ENCODE measurements at regions of chrX and their contacts with region 1.

Region 1: DNA sequence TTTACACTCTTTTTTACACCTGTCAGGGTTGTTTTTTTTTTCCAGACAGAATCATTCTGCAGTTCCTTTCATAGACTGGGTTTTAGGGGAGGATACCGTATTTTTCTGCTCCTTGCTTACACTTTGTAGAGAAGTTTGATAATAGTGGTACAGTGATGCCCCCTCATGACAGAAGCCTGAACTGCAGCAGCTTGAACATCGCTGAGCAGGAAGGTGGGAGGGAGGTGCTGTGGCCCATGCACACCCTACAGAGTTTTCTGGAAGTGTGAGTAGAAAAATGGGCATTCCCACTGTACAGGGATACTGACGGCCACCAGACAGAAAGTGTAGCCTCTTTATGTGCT is 54.5 kb downstream of the RAB40A start:
- DNase-seq: peak; percentile 84
- H3K4me3 ChIP-seq: peak overlapping the region in 1 of 3 experiments; percentile 51
- H3K27ac ChIP-seq: no peak overlapping the region
- H3K4me1 ChIP-seq: no peaks in the 10 kb centered on the region
- H3K27me3 ChIP-seq: no peaks in the 10 kb centered on the region
- CTCF ChIP-seq: peak; percentile 69 to 71
- POLR2A ChIP-seq: no peak

Region 2: DNA sequence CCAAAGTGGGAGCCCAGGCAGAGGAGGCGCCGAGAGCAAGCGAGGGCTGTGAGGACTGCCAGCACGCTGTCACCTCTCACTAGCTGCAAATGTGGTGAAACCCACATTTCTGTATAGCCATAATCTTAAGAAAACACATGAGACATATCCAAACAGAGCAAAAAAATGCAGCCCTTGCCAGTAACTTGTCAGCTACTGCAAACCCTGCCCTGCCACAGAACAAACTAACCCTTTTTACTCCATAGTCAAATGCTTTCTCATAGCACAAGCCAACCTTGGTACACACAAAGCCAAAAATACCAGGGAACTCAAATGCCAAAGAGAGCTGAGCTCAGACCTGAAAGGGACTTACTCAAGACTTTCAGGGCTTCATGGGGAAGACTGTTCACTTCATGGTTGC is 356.9 kb before region 1 on chrX:
- CTCF ChIA-PET with region 1: no interaction called
- POLR2A ChIA-PET with region 1: no interaction called
- dilution Hi-C with region 1: no loop called
- intact Hi-C with region 1: no loop called
- DNase-seq: no peak
- H3K4me3 ChIP-seq: no peak overlapping the region
- H3K27ac ChIP-seq: no peak overlapping the region
- H3K4me1 ChIP-seq: no peaks in the 10 kb centered on the region
- H3K27me3 ChIP-seq: no peaks in the 10 kb centered on the region
- CTCF ChIP-seq: no peak
- POLR2A ChIP-seq: no peak

Region 3: DNA sequence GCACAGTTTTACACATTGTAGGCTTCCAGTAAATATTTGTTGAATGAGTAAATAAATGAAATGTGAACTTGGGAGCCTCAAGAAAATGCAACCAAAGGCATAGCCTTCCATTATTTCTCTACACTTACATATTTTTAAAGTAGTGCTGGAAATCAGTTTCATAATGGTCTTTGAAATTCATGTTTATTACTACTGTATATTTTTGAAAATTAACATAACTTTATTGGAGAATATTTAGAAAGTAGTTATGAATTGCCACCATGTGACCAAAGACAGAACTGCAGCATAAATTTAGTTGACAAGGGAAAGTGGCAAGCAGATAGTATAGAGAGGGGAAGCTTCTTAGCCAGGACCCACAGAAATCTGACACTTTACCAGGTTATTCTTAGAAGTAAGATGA is 216.2 kb before region 1 on chrX:
- CTCF ChIA-PET with region 1: interaction called, 27 read pairs
- POLR2A ChIA-PET with region 1: no interaction called
- dilution Hi-C with region 1: no loop called
- intact Hi-C with region 1: no loop called
- DNase-seq: peak; percentile 33
- H3K4me3 ChIP-seq: no peak overlapping the region
- H3K27ac ChIP-seq: no peak overlapping the region
- H3K4me1 ChIP-seq: peaks cover 3% of the 10 kb centered on the region
- H3K27me3 ChIP-seq: no peaks in the 10 kb centered on the region
- CTCF ChIP-seq: no peak
- POLR2A ChIP-seq: no peak

Region 4: DNA sequence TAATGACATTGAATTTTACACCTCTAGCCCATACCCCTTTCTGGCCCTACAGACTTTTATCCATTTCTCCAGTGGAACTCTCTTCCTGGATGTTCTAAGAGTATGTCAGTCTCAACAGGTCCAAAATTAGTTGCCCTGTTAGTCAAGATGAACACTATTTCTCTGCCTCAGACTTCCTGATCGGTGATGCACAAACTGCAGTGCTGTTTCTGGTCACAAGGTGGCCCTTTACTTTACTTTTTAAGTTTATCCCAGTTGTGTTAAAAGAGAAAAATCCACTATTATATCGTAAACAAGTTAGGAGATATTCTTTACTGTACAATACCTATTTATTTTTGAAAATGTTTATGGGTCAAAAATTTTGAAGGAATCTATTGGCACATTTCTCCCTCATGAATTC is 121.6 kb before region 1 on chrX:
- CTCF ChIA-PET with region 1: interaction called, 129 read pairs
- POLR2A ChIA-PET with region 1: no interaction called
- dilution Hi-C with region 1: no loop called
- intact Hi-C with region 1: loop called (anchors 1 kb)
- DNase-seq: peak; percentile 64
- H3K4me3 ChIP-seq: no peak overlapping the region
- H3K27ac ChIP-seq: no peak overlapping the region
- H3K4me1 ChIP-seq: peaks cover 9% of the 10 kb centered on the region
- H3K27me3 ChIP-seq: no peaks in the 10 kb centered on the region
- CTCF ChIP-seq: peak; percentile 41 to 50
- POLR2A ChIP-seq: no peak

Region 5: DNA sequence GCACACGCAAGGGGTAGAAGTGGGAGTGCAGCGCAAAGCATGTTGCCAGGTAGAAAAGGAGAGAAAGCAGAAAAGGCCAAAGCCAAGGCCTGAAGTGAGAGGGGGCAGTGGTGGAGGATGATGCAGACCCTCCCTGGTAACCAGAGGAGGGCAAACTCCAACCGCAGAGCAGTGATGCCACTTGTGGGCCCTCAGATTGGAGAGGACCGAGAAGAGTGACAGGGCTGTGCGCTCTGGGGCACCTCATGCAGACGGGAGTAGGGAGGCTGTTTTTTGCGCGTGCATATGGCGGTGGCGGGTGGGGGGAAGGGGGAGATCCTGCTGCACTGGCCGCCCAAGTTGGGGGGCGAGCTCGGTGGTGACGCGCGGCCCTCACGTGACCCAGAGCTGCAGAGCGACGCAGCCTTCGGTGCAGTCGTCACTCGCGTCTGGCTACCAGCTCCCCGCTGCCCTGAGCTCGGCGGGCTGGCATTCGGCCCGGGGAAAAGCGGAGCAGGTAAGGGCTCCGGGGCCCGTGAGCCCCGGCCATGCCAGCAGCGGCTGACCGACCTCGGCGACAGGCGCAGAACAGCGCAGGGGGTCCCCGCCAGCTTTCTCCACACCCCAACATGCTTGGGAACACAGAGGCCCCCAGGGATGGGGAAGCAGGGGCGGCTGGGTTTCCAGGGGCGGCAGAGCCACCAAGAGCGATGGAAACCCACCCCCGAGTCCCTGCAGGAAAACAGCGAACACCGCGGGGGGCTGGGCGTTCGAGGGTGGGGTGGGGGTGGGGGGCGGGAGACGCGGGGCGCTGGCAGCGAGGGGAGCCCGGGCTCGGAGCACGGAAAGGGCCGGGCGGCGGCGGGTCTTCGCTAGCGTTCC is 88.4 kb before region 1 on chrX and contains the start of gene BEX3:
- CTCF ChIA-PET with region 1: interaction called, 26 read pairs
- POLR2A ChIA-PET with region 1: no interaction called
- dilution Hi-C with region 1: no loop called
- intact Hi-C with region 1: loop called (anchors 1 kb)
- DNase-seq: peak; percentile 55
- H3K4me3 ChIP-seq: peak within 1 kb of the TSS; percentile 74 to 91 (median 91)
- H3K27ac ChIP-seq: peak within 1 kb of the TSS; percentile 89
- H3K4me1 ChIP-seq: peaks cover 6% of the 10 kb centered on the region
- H3K27me3 ChIP-seq: no peaks in the 10 kb centered on the region
- CTCF ChIP-seq: no peak
- POLR2A ChIP-seq: peak; percentile 65
- total RNA-seq, gene BEX3: 227 and 233 TPM in 2 replicates

Region 6: DNA sequence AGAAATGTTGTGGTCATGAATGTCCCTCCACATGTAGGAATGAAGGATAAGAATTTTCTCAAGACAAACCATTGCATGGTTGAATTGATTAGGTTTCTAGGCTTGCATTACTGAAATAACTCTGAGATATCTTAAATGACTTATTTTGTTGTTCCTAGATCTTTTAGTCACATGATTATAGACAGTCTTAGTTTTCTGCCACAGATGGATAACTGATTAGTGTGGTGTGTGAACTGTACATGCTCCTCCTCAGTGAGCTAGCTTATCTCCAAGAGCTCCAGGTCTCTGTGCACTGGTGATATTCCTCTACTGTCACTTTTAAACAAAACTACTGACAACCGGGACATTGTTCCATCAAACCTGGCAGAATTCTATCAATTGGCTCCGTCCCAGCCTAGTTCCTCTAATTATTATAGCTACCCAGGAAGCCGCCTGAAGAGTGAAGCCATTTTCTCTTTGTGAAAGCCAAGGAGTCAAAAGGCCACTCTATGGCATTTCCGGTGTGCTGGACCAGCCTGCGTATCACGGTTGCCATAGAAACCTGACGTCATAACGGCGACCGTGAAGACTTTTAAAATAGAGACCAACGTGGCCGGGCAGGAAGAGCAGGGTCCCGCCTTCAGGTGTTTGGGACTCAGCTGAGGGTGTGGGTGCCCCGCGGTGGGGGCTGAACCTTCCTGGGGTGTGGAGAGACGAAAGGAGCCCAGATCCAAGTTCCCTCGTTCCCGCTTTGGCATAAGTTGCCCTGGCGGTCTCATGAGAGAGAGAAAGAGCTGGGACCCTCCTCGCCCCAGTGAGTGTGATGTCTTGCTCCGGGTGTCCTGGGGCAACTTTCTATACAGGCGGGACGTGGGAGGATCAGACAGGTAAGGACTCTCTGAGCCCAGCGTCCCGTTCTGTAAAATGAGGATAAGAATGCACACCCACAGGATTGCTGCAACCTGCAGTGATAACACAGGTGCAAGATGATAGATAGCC is 60.2 kb before region 1 on chrX:
- CTCF ChIA-PET with region 1: interaction called, 11 read pairs
- POLR2A ChIA-PET with region 1: no interaction called
- dilution Hi-C with region 1: no loop called
- intact Hi-C with region 1: no loop called
- DNase-seq: peak; percentile 79
- H3K4me3 ChIP-seq: peak overlapping the region; percentile 19 to 62 (median 41)
- H3K27ac ChIP-seq: peak overlapping the region; percentile 71
- H3K4me1 ChIP-seq: peaks cover 11% of the 10 kb centered on the region
- H3K27me3 ChIP-seq: no peaks in the 10 kb centered on the region
- CTCF ChIP-seq: no peak
- POLR2A ChIP-seq: no peak

Region 7: GRCh38 chrX:103573208-103573607 is 108.5 kb after region 1 on chrX:
- CTCF ChIA-PET with region 1: no interaction called
- POLR2A ChIA-PET with region 1: no interaction called
- dilution Hi-C with region 1: no loop called
- intact Hi-C with region 1: no loop called
- DNase-seq: no peak
- H3K4me3 ChIP-seq: no peak overlapping the region
- H3K27ac ChIP-seq: no peak overlapping the region
- H3K4me1 ChIP-seq: no peaks in the 10 kb centered on the region
- H3K27me3 ChIP-seq: no peaks in the 10 kb centered on the region
- CTCF ChIP-seq: no peak
- POLR2A ChIP-seq: no peak

Measured in endothelial cell of umbilical vein (primary cell).